ENCODE measurements at regions of chr6 and their contacts with region 1.

Region 1: GRCh38 chr6:138765896-138766655 is 7.5 kb upstream of the CCDC28A start:
- DNase-seq: peak; percentile 8
- H3K4me3 ChIP-seq: no peak overlapping the region
- H3K27ac ChIP-seq: no peak overlapping the region
- H3K27me3 ChIP-seq: no peaks in the 10 kb centered on the region
- CTCF ChIP-seq: peak; percentile 60

Region 2: GRCh38 chr6:138428944-138429598 is 337.0 kb before region 1 on chr6:
- CTCF ChIA-PET with region 1: interaction called, 17 read pairs
- POLR2A ChIA-PET with region 1: no interaction called
- DNase-seq: peak; percentile 41
- H3K4me3 ChIP-seq: no peak overlapping the region
- H3K27ac ChIP-seq: no peak overlapping the region
- H3K27me3 ChIP-seq: no peaks in the 10 kb centered on the region
- CTCF ChIP-seq: peak; percentile 62

Region 3: DNA sequence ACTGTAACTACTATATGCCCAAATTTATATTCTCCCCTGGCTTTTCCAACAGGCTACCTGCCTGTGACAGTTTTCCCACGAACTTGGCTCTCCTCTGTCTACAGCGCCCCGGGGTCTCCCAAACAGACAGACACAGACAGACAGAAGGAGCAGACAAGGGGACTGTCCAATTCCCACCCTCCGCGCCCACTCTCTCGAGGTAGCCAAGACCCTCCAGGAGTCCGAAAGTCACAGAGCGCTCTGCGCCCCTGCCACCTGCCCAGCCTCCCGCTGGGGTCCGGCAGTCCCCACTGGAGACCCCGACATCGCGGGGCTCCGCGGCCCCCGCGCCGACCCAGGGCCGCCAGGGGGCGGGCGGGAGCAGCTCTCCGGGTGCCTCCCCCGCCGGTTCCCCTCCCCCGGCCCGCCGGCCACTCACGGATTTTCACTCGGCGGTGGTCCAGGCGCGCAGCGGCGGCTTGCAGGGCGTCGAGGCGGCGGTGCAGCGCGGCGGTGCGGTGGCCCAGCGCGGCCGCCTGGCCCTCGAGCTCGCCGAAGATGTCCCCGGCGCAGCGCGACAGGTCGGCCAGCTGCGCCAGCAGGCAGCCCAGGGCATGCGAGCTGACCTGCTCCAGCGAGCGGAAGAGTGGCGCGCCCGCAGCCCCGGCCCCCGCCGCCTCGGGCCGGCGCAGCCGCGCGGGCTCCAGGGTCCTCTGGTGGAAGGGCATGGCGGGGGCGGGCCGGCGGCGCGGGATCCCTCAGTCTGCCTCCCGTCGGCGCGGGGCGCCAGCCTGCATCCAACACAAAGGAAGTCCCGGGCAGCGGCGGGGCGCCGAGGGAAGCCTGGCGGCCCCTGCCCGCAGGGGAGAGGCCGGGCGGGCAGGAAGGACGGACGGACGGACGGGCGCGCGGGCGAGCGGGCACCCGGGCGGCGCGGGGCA is 73.8 kb before region 1 on chr6:
- CTCF ChIA-PET with region 1: interaction called, 26 read pairs
- POLR2A ChIA-PET with region 1: no interaction called
- DNase-seq: no peak
- H3K4me3 ChIP-seq: peak overlapping the region; percentile 78
- H3K27ac ChIP-seq: peak overlapping the region; percentile 70
- H3K27me3 ChIP-seq: no peaks in the 10 kb centered on the region
- CTCF ChIP-seq: peak; percentile 64

Region 4: DNA sequence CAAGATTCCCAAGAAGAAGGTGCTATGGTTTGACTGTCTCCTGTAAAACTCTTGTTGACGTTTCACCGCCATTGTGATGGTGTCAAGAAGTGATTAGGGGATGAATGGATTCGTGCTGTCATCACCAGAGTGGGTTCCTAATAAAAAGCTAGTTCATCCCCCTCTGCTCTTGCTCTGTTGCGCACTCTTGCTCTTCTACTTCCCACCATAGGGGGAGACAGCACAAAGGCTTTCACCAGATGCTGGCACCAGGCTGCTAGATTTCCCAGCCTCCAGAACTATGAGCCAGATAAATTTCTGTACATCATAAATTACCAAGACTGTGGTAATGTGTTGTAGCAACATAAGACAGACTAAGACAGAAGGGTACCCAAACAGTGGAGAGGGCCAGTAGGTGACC is 14.1 kb before region 1 on chr6:
- CTCF ChIA-PET with region 1: interaction called, 16 read pairs
- POLR2A ChIA-PET with region 1: no interaction called
- DNase-seq: no peak
- H3K4me3 ChIP-seq: no peak overlapping the region
- H3K27ac ChIP-seq: no peak overlapping the region
- H3K27me3 ChIP-seq: no peaks in the 10 kb centered on the region
- CTCF ChIP-seq: peak; percentile 33; the same call in 1 of the 2 replicates

Region 5: DNA sequence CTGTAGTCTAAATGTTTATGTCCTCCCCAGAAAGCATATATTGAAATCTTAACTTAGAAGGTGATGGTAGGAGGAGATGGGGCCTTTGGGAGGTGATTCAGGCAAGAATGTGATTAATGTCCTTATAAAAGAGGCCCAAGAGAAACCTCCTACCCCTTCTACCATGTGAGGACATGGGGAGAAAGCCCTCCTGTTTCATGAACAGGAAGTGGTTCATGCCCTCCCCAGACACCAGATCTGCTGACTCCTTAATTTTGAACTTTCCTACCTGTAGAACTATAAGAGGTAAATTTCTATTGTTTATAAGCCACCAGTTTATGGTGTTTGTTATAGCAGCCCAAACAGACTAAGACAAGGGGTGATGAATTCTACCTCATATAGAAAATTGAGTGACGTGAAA is 21.1 kb after region 1 on chr6:
- CTCF ChIA-PET with region 1: no interaction called
- POLR2A ChIA-PET with region 1: no interaction called
- DNase-seq: no peak
- H3K4me3 ChIP-seq: no peak overlapping the region
- H3K27ac ChIP-seq: no peak overlapping the region
- H3K27me3 ChIP-seq: no peaks in the 10 kb centered on the region
- CTCF ChIP-seq: no peak

Measured in AG04450 (cell line).